HCT116 (cell line): ENCODE measurements at regions of chr9 and their contacts with region 1.

Region 1: GRCh38 chr9:127214421-127215267 is 49.9 kb upstream of the GARNL3 start:
- DNase-seq: peak; percentile 48
- ATAC-seq: peak; percentile 86
- H3K4me3 ChIP-seq: no peak overlapping the region
- H3K27ac ChIP-seq: no peak overlapping the region
- H3K4me1 ChIP-seq: peaks cover 0 to 4% of the 10 kb centered on the region in 2 experiments; a peak in 1 of 4 replicates
- H3K27me3 ChIP-seq: no peaks in the 10 kb centered on the region
- CTCF ChIP-seq: peak; percentile 78 to 91 (median 90)
- POLR2A ChIP-seq: no peak
- RAD21 ChIP-seq: peak; percentile 88

Region 2: GRCh38 chr9:127049044-127049443 is 165.6 kb before region 1 on chr9:
- CTCF ChIA-PET with region 1: no interaction called
- POLR2A ChIA-PET with region 1: no interaction called
- RAD21 ChIA-PET with region 1: no interaction called
- intact Hi-C with region 1: no loop called
- DNase-seq: no peak
- ATAC-seq: peak; percentile 50
- H3K4me3 ChIP-seq: no peak overlapping the region
- H3K27ac ChIP-seq: no peak overlapping the region
- H3K4me1 ChIP-seq: peaks cover 2 to 13% of the 10 kb centered on the region in 2 experiments; a peak in 3 of 4 replicates
- H3K27me3 ChIP-seq: no peaks in the 10 kb centered on the region
- CTCF ChIP-seq: no peak
- POLR2A ChIP-seq: no peak
- RAD21 ChIP-seq: no peak

Region 3: DNA sequence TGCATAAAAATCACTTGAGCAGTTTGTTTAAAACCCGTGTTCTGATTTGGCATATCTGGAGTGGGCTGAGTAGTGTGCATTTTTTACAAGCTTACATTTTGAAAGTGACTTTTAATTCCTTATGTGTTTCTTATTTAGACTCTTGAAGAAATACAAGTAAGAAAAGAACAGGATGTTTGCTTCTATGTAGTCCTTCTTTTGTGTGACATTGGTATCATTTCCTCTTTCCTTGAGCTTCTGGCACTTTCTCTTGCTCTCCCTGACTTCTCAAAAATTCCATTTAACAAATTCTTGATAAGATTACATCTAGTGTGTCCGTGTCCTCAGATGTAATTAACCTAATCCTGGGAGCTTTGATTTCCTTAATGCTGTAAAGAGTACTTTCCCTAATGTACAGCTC is 62.5 kb after region 1 on chr9:
- CTCF ChIA-PET with region 1: no interaction called
- POLR2A ChIA-PET with region 1: no interaction called
- RAD21 ChIA-PET with region 1: no interaction called
- intact Hi-C with region 1: loop called (anchors 10 kb)
- DNase-seq: no peak
- ATAC-seq: no peak
- H3K4me3 ChIP-seq: no peak overlapping the region
- H3K27ac ChIP-seq: no peak overlapping the region
- H3K4me1 ChIP-seq: peaks cover 0 to 5% of the 10 kb centered on the region in 2 experiments; a peak in 1 of 4 replicates
- H3K27me3 ChIP-seq: no peaks in the 10 kb centered on the region
- CTCF ChIP-seq: no peak
- POLR2A ChIP-seq: no peak
- RAD21 ChIP-seq: no peak

Region 4: DNA sequence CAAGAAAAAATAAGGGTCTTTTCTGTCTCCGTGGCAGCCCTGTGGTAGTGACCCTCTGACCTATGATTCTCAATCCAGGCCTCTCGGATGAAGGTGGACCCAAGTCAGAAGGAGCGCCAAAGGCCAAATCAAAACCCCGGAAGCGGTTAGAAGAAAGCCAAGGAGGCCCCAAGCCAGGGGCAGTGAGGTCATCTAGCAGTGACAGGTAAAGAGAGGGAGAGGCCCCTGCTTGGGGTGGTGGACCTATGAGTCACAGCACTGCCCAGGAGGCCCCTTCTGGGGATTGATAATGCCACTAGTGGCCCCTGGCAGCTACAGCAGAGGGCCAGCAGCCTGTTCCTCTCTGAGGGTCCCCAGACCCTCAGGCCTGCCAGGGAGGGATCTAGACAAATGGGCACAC is 175.9 kb after region 1 on chr9:
- CTCF ChIA-PET with region 1: no interaction called
- POLR2A ChIA-PET with region 1: no interaction called
- RAD21 ChIA-PET with region 1: interaction called in 1 of 2 experiments, 3 read pairs
- intact Hi-C with region 1: loop called (anchors 2 kb)
- DNase-seq: no peak
- ATAC-seq: peak; percentile 35; the same call in 1 of the 2 replicates
- H3K4me3 ChIP-seq: no peak overlapping the region
- H3K27ac ChIP-seq: no peak overlapping the region
- H3K4me1 ChIP-seq: peaks cover 37 to 48% of the 10 kb centered on the region in 2 experiments
- H3K27me3 ChIP-seq: peaks cover 16% of the 10 kb centered on the region; the same call in 1 of the 2 replicates
- CTCF ChIP-seq: no peak
- POLR2A ChIP-seq: no peak
- RAD21 ChIP-seq: no peak

Region 5: GRCh38 chr9:127423934-127424675 is 209.5 kb after region 1 on chr9 and contains the start of gene ZNF79:
- CTCF ChIA-PET with region 1: interaction called, 3 read pairs
- POLR2A ChIA-PET with region 1: no interaction called
- RAD21 ChIA-PET with region 1: no interaction called
- intact Hi-C with region 1: loop called (anchors 1 kb)
- DNase-seq: peak; percentile 88
- ATAC-seq: peak; percentile 93
- H3K4me3 ChIP-seq: peak within 1 kb of the TSS; percentile 98 to 99
- H3K27ac ChIP-seq: peak within 1 kb of the TSS; percentile 92
- H3K4me1 ChIP-seq: peaks cover 3 to 34% of the 10 kb centered on the region in 2 experiments; a peak in 3 of 4 replicates
- H3K27me3 ChIP-seq: no peaks in the 10 kb centered on the region
- CTCF ChIP-seq: no peak
- POLR2A ChIP-seq: peak; percentile 50
- RAD21 ChIP-seq: no peak
- total RNA-seq, gene ZNF79: 5.3 TPM